Caco-2 (cell line): ENCODE measurements at regions of chr2 and their contacts with region 1.

Region 1: DNA sequence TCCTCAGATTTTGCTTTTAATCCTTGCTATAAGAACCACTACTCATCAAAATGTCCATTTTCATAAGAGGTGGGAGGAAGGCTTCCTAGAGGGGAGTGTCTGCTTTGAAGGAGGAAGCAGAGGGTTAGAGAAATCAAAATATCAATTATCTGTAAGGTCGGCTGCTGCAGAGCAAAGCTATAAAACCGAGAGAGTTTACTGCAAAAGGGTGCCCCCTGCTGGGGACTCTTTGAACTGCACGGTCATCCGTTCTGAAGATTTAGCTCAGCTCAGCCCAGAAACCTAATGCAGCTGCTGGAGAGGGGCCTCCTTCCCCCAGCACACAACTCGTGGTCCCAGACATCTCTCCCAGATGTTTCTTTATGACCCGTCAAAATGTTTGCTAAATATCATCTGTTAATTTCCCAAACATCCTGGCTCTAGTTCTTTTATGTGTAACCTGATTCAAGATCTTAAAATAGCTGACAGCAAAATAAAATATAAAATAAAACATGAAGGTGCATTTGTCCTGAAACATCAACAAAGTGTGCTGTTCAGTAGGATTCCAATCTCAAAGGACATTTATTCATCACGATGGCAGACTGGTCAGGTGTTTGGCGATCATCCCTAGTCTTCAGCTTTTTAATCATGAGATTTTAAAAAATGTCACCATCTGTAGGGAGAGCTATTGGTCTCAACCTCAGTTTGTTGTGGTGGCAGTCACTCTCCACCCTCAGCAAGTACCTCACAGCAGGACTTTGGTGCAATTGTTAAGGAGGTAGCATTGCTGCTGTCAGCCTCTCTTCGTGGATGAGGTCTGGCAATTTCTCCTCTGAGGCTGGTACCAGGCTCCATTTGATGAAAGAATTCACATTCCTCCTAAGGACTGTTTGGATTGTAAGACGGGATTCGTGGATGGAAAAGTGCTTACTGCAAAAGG is 185.9 kb downstream of the MTX2 start:
- DNase-seq: peak; percentile 76 to 85
- H3K4me3 ChIP-seq: no peak overlapping the region
- H3K4me3 Mint-ChIP-seq: no peak overlapping the region
- H3K27ac Mint-ChIP-seq: no peak overlapping the region
- H3K4me1 ChIP-seq: no peaks in the 10 kb centered on the region
- H3K4me1 Mint-ChIP-seq: no peaks in the 10 kb centered on the region
- H3K27me3 ChIP-seq: no peaks in the 10 kb centered on the region
- H3K27me3 Mint-ChIP-seq: peaks cover 15% of the 10 kb centered on the region
- CTCF ChIP-seq: peak; percentile 88 to 91

Region 2: GRCh38 chr2:176136374-176137251 is 318.5 kb before region 1 on chr2:
- CTCF ChIA-PET with region 1: interaction called, 3 read pairs
- POLR2A ChIA-PET with region 1: no interaction called
- intact Hi-C with region 1: loop called (anchors 1 kb)
- DNase-seq: peak; percentile 52 to 53
- H3K4me3 ChIP-seq: peak overlapping the region; percentile 52
- H3K4me3 Mint-ChIP-seq: peak overlapping the region; percentile 76
- H3K27ac Mint-ChIP-seq: no peak overlapping the region
- H3K4me1 ChIP-seq: peaks cover 14% of the 10 kb centered on the region; the same call in 1 of the 2 replicates
- H3K4me1 Mint-ChIP-seq: peaks cover 13% of the 10 kb centered on the region
- H3K27me3 ChIP-seq: peaks cover 4% of the 10 kb centered on the region
- H3K27me3 Mint-ChIP-seq: peaks cover 49% of the 10 kb centered on the region
- CTCF ChIP-seq: no peak

Region 3: GRCh38 chr2:176554101-176555048 is 99.2 kb after region 1 on chr2:
- CTCF ChIA-PET with region 1: interaction called, 10 read pairs
- POLR2A ChIA-PET with region 1: no interaction called
- intact Hi-C with region 1: no loop called
- DNase-seq: peak in 1 of 2 experiments; percentile 43
- H3K4me3 ChIP-seq: no peak overlapping the region
- H3K4me3 Mint-ChIP-seq: peak overlapping the region; percentile 57
- H3K27ac Mint-ChIP-seq: no peak overlapping the region
- H3K4me1 ChIP-seq: 0 out of 2 replicates have a peak, but pooled peaks cover 4% of the 10 kb centered on the region
- H3K4me1 Mint-ChIP-seq: no peaks in the 10 kb centered on the region
- H3K27me3 ChIP-seq: no peaks in the 10 kb centered on the region; the same call in 1 of the 2 replicates
- H3K27me3 Mint-ChIP-seq: peaks cover 9% of the 10 kb centered on the region
- CTCF ChIP-seq: peak; percentile 65 to 78

Region 4: DNA sequence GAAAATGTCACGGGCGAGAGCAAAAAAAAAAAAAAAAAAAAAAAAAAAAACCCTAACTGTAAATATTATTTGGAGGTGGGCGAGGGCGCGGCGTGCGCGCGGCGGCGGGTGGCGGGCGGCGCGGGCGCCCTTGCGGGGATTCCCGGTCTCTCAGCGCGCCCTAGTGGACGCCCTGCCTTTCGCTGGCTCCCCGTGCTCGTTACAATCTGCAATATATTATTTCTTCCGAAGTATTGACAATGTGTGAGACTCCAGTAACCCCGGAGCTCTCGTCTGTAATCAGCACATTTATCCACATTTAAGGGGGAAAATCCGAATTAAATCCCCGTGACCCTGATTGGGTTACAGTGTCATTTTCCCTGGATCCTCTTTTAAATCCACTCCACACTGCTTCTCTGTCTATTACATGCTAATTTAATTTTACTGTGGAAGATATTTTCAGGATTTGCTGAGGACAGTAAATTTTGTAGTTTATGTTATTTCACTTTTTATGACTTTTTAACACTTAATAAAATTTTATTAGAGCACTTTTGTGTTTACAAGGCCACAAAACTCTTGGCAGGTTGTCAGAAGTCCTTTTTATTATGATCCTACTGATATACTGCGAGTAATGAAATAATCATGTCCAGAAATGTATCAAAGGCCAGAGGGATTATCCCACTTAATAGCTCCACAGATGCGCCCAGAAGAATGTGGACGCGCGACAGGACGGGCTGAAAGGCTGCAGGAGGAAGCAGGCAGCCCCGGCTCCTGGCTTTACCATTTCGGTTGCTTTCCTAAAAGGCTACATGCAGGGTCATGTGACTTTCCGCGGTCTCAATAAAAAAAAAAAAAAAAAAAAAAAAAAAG is 183.2 kb after region 1 on chr2:
- CTCF ChIA-PET with region 1: interaction called, 6 read pairs
- POLR2A ChIA-PET with region 1: no interaction called
- intact Hi-C with region 1: loop called (anchors 10 kb)
- DNase-seq: peak; percentile 48 to 69
- H3K4me3 ChIP-seq: peak overlapping the region; percentile 31
- H3K4me3 Mint-ChIP-seq: peak overlapping the region; percentile 55
- H3K27ac Mint-ChIP-seq: no peak overlapping the region
- H3K4me1 ChIP-seq: no peaks in the 10 kb centered on the region
- H3K4me1 Mint-ChIP-seq: no peaks in the 10 kb centered on the region
- H3K27me3 ChIP-seq: no peaks in the 10 kb centered on the region; the same call in 1 of the 2 replicates
- H3K27me3 Mint-ChIP-seq: peaks cover 21% of the 10 kb centered on the region
- CTCF ChIP-seq: peak; percentile 72 to 82